ENCODE measurements at regions of chr12 and their contacts with region 1.

Region 1: DNA sequence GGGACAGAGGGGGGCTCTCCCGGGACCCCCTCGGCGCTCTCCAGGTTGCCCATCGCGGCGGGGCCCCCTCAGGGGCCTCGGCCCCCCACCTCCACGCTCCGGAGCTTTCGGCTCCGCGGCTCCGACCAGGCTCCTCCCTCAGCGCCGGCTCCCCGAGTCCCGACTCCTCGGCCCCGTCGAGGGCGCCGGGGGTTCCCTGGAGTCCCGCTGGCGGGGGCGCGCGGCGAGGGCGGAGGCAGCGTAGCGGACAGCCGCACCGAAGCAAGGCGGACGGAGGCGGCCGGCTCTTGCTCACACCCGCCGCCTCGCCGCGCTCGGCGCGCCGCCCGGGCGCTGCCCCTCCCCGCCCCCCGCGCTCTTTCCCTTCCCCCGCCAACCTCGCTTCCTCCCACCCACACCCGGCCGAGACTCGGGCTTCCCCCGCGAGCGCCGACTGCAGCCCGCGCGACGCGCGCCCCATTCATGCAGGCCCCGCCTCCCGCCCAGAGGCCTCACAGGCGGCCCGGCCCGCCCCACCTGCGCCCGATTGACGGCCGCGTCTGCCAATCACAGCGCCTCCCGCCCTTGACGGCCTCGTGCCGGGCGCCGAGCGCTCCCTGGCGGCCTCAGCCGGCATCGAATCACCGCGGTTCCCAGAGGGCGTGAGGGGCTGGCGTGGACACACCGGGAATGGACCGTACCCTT is at the start of gene FMNL3:
- DNase-seq: peak; percentile 96 to 99 (median 97)
- H3K4me3 ChIP-seq: peak within 1 kb of the TSS; percentile 8 to 83 (median 56)
- H3K27ac ChIP-seq: peak within 1 kb of the TSS in 4 of 5 donors; percentile 79 to 88 (median 85)
- H3K4me1 ChIP-seq: peaks cover 0 to 34% of the 10 kb centered on the region in 2 donors
- H3K27me3 ChIP-seq: no peaks in the 10 kb centered on the region
- CTCF ChIP-seq: peak; percentile 77 to 99 (median 96)
- POLR2A ChIP-seq: peak in 1 of 2 donors; percentile 25
- total RNA-seq, gene FMNL3: 7.7 to 24.1 (median 19.0) TPM

Region 2: GRCh38 chr12:49644620-49644994 is 62.7 kb before region 1 on chr12:
- intact Hi-C with region 1: loop called (anchors 2 kb)
- DNase-seq: peak; percentile 69 to 91 (median 82)
- H3K4me3 ChIP-seq: no peak overlapping the region
- H3K27ac ChIP-seq: peak overlapping the region in 2 of 5 donors; percentile 7 to 14
- H3K4me1 ChIP-seq: peaks cover 4 to 8% of the 10 kb centered on the region in 2 donors
- H3K27me3 ChIP-seq: no peaks in the 10 kb centered on the region
- CTCF ChIP-seq: peak; percentile 73 to 96 (median 92)
- POLR2A ChIP-seq: no peak